IMR-90 (cell line): ENCODE measurements at regions of chr3 and their contacts with region 1.

Region 1: DNA sequence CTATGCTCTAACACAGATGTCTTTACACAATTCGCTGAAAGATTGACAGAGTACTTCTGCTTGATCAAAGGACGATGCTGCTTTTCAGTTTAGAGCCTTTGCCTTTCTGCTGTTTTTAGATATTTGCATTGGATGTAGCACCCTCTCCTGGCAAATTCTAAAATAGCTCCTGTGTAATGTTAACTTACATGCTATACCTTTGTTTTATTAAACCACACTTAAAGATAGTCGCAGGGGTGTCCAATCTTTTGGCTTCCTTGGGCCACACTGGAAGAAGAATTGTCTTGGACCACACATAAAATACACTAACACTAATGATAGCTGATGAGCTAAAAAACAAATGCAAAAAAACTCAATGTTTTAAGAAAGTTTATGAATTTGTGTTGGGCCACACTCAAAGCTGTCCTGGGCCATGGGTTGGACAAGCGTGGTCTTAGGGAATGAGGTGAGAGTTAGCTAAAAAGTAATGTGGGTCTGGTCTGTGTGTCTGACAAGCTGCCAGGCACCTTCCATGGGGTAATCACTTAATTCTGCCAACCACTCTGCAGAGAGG is 62.9 kb downstream of the ATG7 start:
- DNase-seq: peak; percentile 81
- ATAC-seq: peak; percentile 81
- H3K4me3 ChIP-seq: no peak overlapping the region
- H3K27ac ChIP-seq: no peak overlapping the region
- H3K4me1 ChIP-seq: peaks cover 10% of the 10 kb centered on the region
- H3K27me3 ChIP-seq: no peaks in the 10 kb centered on the region
- CTCF ChIP-seq: peak; percentile 82
- POLR2A ChIP-seq: no peak
- RAD21 ChIP-seq: peak; percentile 91

Region 2: GRCh38 chr3:10945683-10946287 is 389.3 kb before region 1 on chr3:
- CTCF ChIA-PET with region 1: no interaction called
- POLR2A ChIA-PET with region 1: no interaction called
- dilution Hi-C with region 1: no loop called
- in situ Hi-C with region 1: loop called (anchors 10 kb)
- intact Hi-C with region 1: loop called (anchors 1 kb)
- DNase-seq: peak; percentile 25
- ATAC-seq: peak; percentile 88
- H3K4me3 ChIP-seq: no peak overlapping the region
- H3K27ac ChIP-seq: no peak overlapping the region
- H3K4me1 ChIP-seq: no peaks in the 10 kb centered on the region
- H3K27me3 ChIP-seq: peaks cover 13% of the 10 kb centered on the region
- CTCF ChIP-seq: peak; percentile 66
- POLR2A ChIP-seq: no peak
- RAD21 ChIP-seq: peak; percentile 58

Region 3: DNA sequence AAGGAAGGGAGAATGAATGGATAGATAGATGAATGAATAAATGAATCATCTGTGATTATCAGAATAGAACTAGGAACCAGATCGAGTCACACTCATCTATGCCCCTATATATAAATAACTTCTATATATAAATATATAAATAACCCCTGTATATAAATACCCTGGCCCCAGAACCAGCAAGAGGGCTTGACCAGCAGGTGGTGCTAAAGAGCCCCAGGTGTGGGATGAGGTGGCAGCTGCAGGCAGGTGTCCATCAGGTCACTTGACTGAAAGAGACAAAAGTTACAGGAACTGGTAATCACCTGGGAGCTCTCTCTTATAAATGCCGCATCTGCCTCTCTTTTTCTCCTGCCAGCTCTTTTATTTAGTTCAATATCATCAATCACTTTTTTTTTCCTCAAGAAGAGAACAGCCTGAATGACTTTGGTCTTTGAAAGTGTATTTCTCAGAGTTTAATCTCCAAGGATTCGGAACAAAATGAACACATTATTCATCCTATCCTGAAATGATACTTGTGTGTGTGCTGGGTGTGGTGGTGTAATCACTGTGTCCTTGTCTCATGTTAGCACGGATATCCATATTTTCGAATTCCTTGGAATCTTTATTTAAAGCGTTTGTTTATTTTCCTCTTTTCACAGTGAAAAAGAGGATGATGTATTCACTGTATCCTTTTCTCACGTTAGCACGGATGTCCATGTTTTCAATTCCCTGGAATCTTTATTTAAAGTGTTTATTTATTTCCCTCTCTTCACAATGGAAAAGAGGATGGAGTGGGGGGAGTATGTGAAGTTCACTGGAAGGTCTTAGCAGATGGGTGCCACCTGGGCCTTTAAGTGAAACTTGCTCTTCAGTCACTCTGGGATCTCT is 98.3 kb before region 1 on chr3:
- CTCF ChIA-PET with region 1: no interaction called
- POLR2A ChIA-PET with region 1: no interaction called
- dilution Hi-C with region 1: no loop called
- in situ Hi-C with region 1: no loop called
- intact Hi-C with region 1: loop called (anchors 5 kb)
- DNase-seq: peak; percentile 69
- ATAC-seq: peak; percentile 16
- H3K4me3 ChIP-seq: no peak overlapping the region
- H3K27ac ChIP-seq: peak overlapping the region; percentile 86
- H3K4me1 ChIP-seq: peaks cover 5% of the 10 kb centered on the region
- H3K27me3 ChIP-seq: no peaks in the 10 kb centered on the region
- CTCF ChIP-seq: peak; percentile 56
- POLR2A ChIP-seq: no peak
- RAD21 ChIP-seq: peak; percentile 43

Region 4: GRCh38 chr3:11271986-11272904 is 62.9 kb before region 1 on chr3 and contains the start of gene ATG7:
- CTCF ChIA-PET with region 1: no interaction called
- POLR2A ChIA-PET with region 1: no interaction called
- dilution Hi-C with region 1: no loop called
- in situ Hi-C with region 1: no loop called
- intact Hi-C with region 1: loop called (anchors 1 kb)
- DNase-seq: peak; percentile 96
- ATAC-seq: peak; percentile 99
- H3K4me3 ChIP-seq: peak within 1 kb of the TSS; percentile 94
- H3K27ac ChIP-seq: peak within 1 kb of the TSS; percentile 79
- H3K4me1 ChIP-seq: peaks cover 6% of the 10 kb centered on the region
- H3K27me3 ChIP-seq: no peaks in the 10 kb centered on the region
- CTCF ChIP-seq: no peak
- POLR2A ChIP-seq: peak; percentile 94
- RAD21 ChIP-seq: no peak; the same call in 1 of the 2 replicates
- total RNA-seq, gene ATG7: 51.4 and 65.3 TPM in 2 replicates

Region 5: DNA sequence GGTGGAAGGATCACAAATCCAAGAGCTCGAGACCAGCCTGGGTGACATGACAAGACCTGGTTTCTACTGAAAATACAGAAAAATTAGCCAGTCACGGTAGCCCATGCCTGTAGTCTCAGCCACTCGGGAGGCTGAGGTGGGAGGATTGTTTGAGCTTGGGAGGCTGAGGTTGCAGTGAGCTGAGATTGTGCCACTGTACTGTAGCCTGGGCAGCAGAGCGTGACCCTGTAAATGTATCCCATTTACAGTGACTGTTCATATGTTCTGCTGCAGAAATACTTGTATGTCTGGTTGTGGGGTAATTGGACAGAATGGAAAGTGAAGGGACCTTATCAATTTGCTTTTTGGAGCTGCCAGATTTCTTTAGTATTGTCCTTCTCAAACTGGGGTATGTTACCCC is 38.0 kb before region 1 on chr3:
- CTCF ChIA-PET with region 1: no interaction called
- POLR2A ChIA-PET with region 1: no interaction called
- dilution Hi-C with region 1: no loop called
- in situ Hi-C with region 1: no loop called
- intact Hi-C with region 1: no loop called
- DNase-seq: no peak
- ATAC-seq: no peak
- H3K4me3 ChIP-seq: no peak overlapping the region
- H3K27ac ChIP-seq: no peak overlapping the region
- H3K4me1 ChIP-seq: peaks cover 2% of the 10 kb centered on the region; the same call in 1 of the 2 replicates
- H3K27me3 ChIP-seq: no peaks in the 10 kb centered on the region
- CTCF ChIP-seq: no peak
- POLR2A ChIP-seq: no peak
- RAD21 ChIP-seq: no peak